Activated T-helper 1 cell treated with anti-CD3 and anti-CD28 coated beads, Interleukin-12 subunit alpha, Interleukin-12 subunit beta, Interleukin-2, Interleukin-4 antibody, amounts not matched to agents 30 ng/mL and 10 ng/mL and 1 ng/mL, durations not matched to agents 14 hours and 24 hours and 36 hours (primary cell): ENCODE measurements at regions of chr22 and their contacts with region 1.

Region 1: DNA sequence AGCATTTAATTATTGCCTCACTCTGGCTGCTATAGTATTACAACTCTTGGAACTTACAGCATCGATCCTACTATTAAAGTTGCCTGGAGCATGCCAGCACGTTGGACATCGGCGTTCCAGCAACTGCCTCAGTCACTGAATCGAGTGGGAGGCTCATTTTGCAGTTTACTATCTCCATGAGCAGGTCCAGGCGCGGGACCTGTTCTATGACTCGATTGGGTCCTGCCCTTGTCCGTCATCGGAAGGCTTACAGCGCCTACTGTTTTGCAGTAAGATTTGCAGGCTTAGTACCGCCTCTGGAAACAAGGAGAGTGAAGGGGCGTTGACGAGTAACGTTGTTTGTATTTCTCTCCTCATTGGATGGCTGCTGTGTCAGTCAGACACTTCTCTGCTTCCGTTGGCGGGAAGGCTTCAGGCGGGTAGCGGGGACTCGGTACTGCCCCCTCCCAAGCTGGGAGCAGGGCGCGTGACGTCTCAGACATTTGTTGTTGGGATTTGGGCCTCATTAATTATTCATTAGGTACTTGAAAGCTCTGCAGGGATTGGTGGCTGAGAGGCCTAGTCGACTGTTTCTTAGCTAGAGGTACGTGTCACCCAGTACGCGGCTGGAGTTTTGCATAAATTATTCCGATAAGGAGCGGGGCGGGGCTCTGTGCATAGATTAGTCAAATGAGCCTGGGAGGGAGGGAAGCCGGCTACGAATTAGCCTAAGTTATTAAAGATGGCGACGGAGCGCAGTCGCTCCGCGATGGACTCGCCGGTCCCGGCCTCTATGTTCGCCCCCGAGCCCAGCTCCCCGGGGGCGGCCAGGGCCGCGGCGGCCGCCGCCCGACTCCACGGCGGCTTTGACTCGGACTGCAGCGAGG is at the start of gene GTPBP1:
- DNase-seq: peak; percentile 96
- H3K4me3 Mint-ChIP-seq: peak within 1 kb of the TSS; percentile 94
- H3K27ac Mint-ChIP-seq: peak within 1 kb of the TSS; percentile 97
- H3K4me1 Mint-ChIP-seq: peaks cover 55% of the 10 kb centered on the region
- H3K27me3 Mint-ChIP-seq: peaks cover 2% of the 10 kb centered on the region
- total RNA-seq, gene GTPBP1: 102 and 111 TPM in 2 replicates

Region 2: GRCh38 chr22:38051900-38052862 is 653.3 kb before region 1 on chr22:
- intact Hi-C with region 1: loop called (anchors 10 kb)
- DNase-seq: peak; percentile 59
- H3K4me3 Mint-ChIP-seq: no peak overlapping the region
- H3K27ac Mint-ChIP-seq: no peak overlapping the region
- H3K4me1 Mint-ChIP-seq: peaks cover 13% of the 10 kb centered on the region
- H3K27me3 Mint-ChIP-seq: peaks cover 8% of the 10 kb centered on the region

Region 3: DNA sequence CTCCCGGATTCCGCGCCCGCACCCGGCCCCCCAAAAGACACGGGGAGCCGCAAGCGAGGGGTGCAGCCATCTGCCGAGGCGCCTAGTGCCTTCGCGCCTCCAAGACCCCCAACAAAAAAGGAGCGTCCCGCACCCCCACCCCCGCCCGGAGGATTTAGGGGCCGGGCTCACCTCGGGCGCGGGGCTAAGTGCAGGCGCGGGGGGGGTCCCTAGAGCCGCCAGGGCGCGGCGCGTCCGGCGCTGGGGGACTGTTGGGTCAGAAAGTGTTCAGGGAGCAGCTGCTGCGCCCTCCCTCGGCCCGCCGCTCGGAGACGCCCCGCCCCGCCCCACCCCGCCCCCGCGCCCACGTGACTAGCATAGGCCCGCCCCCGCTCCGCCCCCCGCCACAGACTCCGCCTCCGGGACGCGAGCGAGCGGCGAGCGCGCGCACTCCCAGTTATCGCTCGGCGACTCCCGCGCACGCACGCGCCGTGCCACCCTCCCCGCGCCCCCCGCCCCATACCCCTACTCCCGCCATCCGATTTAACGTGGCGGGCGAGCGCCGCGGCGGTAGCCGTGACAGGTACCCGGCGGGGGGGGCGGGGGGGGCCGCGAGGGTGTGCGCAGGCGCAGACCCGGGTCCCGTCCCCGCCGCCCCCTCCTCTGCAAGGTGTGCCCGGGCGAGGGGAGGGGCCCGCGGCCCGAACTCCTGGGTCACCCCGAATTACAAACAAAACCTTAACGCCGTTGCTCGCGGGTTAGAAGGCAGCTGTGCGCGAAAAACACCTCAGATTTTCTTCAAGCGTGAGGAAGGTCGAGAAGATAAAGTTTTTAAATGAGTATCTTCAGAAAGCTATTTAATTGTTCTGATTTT is 306.6 kb before region 1 on chr22:
- intact Hi-C with region 1: loop called (anchors 2 kb)
- DNase-seq: peak; percentile 76
- H3K4me3 Mint-ChIP-seq: peak overlapping the region; percentile 84
- H3K27ac Mint-ChIP-seq: peak overlapping the region; percentile 23
- H3K4me1 Mint-ChIP-seq: peaks cover 35% of the 10 kb centered on the region
- H3K27me3 Mint-ChIP-seq: peaks cover 9% of the 10 kb centered on the region

Region 4: DNA sequence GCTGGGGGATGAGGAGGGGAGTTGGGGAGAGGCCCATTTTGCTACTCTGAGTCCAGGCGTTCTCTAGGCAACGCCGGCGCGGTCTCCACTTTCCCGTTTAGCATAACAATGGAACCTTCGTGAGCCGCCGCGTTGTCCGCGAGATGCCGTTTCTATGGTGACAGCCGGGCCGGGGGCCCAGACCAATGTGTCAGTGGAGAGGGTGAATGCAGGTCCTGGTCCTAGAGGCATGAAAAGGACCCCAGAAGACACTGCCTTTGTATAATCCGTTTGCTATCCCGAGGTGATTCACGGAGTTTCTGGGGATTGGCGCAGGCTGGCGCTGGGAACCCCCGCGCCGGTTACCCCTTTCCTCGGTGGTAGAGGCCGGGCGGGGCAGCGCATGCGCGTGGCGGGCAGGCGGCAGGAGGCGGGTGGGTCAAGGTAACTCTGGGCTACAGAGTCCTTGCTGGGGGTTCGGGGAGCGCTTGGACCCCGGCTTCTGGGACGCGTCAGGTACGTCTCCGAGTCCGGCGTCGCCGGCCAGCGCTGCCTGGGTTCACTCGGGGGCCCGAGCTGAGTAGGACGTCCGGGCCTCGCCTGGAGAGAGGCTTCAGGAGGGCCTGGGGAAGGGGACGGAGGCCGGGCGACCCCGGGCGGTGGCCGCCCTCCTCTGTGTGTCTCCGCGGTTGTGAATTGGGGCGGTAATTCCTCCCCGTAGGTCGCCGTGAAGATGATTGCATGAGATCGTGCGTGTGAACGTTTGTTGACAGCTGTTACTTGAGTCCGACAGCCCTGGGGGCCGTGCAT is 49.0 kb before region 1 on chr22 and contains the starts of genes CBY1 and FAM227A:
- intact Hi-C with region 1: loop called (anchors 1 kb)
- DNase-seq: peak; percentile 83
- H3K4me3 Mint-ChIP-seq: peak within 1 kb of the TSS; percentile 93
- H3K27ac Mint-ChIP-seq: peak within 1 kb of the TSS; percentile 98
- H3K4me1 Mint-ChIP-seq: peaks cover 16% of the 10 kb centered on the region
- H3K27me3 Mint-ChIP-seq: no peaks in the 10 kb centered on the region
- total RNA-seq, gene CBY1: 8.6 and 8.8 TPM in 2 replicates
- total RNA-seq, gene FAM227A: 0.16 and 0.78 TPM in 2 replicates

Region 5: GRCh38 chr22:38755911-38756532 is 50.6 kb after region 1 on chr22 and contains the start of gene SUN2:
- intact Hi-C with region 1: loop called (anchors 1 kb)
- DNase-seq: peak; percentile 94
- H3K4me3 Mint-ChIP-seq: peak within 1 kb of the TSS; percentile 95
- H3K27ac Mint-ChIP-seq: peak within 1 kb of the TSS; percentile 97
- H3K4me1 Mint-ChIP-seq: peaks cover 59% of the 10 kb centered on the region
- H3K27me3 Mint-ChIP-seq: no peaks in the 10 kb centered on the region
- total RNA-seq, gene SUN2: 146 and 154 TPM in 2 replicates

Region 6: GRCh38 chr22:38850941-38851849 is 145.7 kb after region 1 on chr22:
- intact Hi-C with region 1: no loop called
- DNase-seq: no peak
- H3K4me3 Mint-ChIP-seq: no peak overlapping the region
- H3K27ac Mint-ChIP-seq: no peak overlapping the region
- H3K4me1 Mint-ChIP-seq: no peaks in the 10 kb centered on the region
- H3K27me3 Mint-ChIP-seq: peaks cover 31% of the 10 kb centered on the region

Region 7: GRCh38 chr22:38941488-38941987 is 236.1 kb after region 1 on chr22:
- intact Hi-C with region 1: loop called (anchors 1 kb)
- DNase-seq: peak; percentile 37
- H3K4me3 Mint-ChIP-seq: peak overlapping the region; percentile 58
- H3K27ac Mint-ChIP-seq: peak overlapping the region; percentile 83
- H3K4me1 Mint-ChIP-seq: peaks cover 44% of the 10 kb centered on the region
- H3K27me3 Mint-ChIP-seq: peaks cover 20% of the 10 kb centered on the region

Region 8: GRCh38 chr22:39319270-39320022 is 614.0 kb after region 1 on chr22 and contains the start of gene RPL3:
- intact Hi-C with region 1: loop called (anchors 1 kb)
- DNase-seq: peak; percentile 96
- H3K4me3 Mint-ChIP-seq: peak within 1 kb of the TSS; percentile 99
- H3K27ac Mint-ChIP-seq: peak within 1 kb of the TSS; percentile 99
- H3K4me1 Mint-ChIP-seq: peaks cover 42% of the 10 kb centered on the region
- H3K27me3 Mint-ChIP-seq: no peaks in the 10 kb centered on the region
- total RNA-seq, gene RPL3: 1,905 and 1,941 TPM in 2 replicates